Panc1 (cell line): ENCODE measurements at regions of chr2 and their contacts with region 1.

Region 1: DNA sequence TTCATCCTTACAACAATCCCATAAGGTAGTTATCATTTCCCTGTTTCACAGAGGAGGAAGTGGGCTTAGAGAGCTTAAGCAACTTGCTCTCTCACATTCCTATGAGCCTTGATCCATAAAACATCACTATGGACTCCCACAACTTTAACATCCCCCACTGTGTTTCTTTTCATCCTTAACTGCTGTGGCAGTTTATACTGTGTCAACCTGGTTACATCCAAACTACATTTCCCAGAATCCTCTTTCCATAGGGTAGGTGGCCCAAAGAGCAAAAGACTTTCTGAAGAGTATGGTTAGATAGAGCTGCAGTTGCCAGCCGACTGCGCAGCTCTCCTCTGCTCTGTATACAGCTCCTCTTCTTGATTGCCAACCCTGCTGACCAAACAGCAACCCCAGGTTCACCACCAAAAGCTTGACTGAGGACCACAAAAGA is 22.5 kb downstream of the MAP3K2 start:
- DNase-seq: no peak
- ATAC-seq: peak; percentile 81
- H3K4me3 ChIP-seq: no peak overlapping the region
- H3K27ac ChIP-seq: no peak overlapping the region
- H3K4me1 ChIP-seq: peaks cover 33% of the 10 kb centered on the region
- H3K27me3 ChIP-seq: no peaks in the 10 kb centered on the region
- CTCF ChIP-seq: no peak

Region 2: DNA sequence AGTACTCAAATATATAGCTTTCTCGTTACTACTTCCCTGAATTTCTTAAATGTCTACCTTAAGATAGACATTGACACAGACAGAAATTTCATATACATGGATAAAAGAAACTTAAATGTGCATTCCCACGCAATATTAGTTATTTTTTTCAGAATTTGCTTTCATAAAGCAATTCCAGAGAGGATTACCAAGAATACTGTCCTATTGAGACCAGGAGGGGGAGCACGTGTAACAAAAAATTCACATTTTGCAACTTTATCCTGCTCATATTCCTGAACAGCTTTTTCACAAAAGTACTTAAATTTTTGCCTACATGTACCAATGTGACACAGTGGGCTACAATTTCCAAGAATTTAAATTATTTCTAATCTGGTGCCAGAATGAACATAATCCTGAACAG is 40.6 kb before region 1 on chr2:
- CTCF ChIA-PET with region 1: interaction called, 16 read pairs
- POLR2A ChIA-PET with region 1: no interaction called
- in situ Hi-C with region 1: no loop called
- intact Hi-C with region 1: no loop called
- DNase-seq: peak; percentile 10
- ATAC-seq: peak; percentile 78
- H3K4me3 ChIP-seq: no peak overlapping the region
- H3K27ac ChIP-seq: no peak overlapping the region
- H3K4me1 ChIP-seq: no peaks in the 10 kb centered on the region
- H3K27me3 ChIP-seq: no peaks in the 10 kb centered on the region
- CTCF ChIP-seq: peak; percentile 73; the same call in 1 of the 2 replicates